H1 (cell line): ENCODE measurements at regions of chr5 and their contacts with region 1.

Region 1: DNA sequence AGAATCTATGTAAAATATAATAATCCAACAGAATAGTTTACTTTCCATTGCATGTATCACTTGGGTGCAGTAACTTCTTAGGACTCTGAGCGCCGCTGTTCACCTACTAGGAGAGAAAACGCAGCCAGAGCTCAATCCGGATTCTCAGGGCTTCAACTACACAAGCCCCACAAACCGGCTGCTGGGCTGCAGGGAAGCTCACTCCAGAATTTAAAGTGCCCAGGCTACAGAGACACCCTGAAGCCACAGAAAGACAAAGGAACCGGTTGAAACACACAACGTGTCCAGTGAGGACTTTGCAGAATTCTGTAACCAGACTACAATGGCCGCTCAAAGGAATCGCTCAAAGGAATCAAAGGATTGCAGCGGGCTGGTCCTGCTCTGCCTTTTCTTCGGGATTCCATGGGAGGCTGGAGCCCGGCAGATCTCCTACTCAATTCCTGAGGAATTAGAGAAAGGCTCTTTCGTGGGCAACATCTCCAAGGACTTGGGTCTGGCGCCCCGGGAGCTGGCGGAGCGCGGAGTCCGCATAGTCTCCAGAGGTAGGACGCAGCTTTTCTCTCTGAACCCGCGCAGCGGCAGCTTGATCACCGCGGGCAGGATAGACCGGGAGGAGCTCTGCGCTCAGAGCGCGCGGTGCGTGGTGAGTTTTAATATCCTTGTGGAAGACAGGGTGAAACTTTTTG is at the start of gene PCDHGA10:
- DNase-seq: peak in 1 of 2 experiments; percentile 67
- H3K4me3 ChIP-seq: peak within 1 kb of the TSS; percentile 66 to 82 (median 78)
- H3K27ac ChIP-seq: no peak within 1 kb of the TSS
- H3K4me1 ChIP-seq: no peaks in the 10 kb centered on the region
- H3K27me3 ChIP-seq: peaks cover 0 to 10% (median 6%) of the 10 kb centered on the region in 4 experiments; a peak in 6 of 7 replicates
- CTCF ChIP-seq: peak; percentile 35 to 84 (median 74)
- EP300 ChIP-seq: no peak
- POLR2A ChIP-seq: 0 out of 3 replicates have a peak, but pooled peaks of 1 of the 2 experiments have one; percentile 24
- RAD21 ChIP-seq: peak; percentile 84
- total RNA-seq, gene PCDHGA10: 2.1 and 2.2 TPM in 2 replicates

Region 2: GRCh38 chr5:141199359-141200235 is 213.4 kb before region 1 on chr5 and contains the start of gene PCDHB11:
- CTCF ChIA-PET with region 1: interaction called, 18 read pairs
- POLR2A ChIA-PET with region 1: no interaction called
- DNase-seq: no peak
- H3K4me3 ChIP-seq: peak within 1 kb of the TSS in 1 of 4 experiments; percentile 25; a peak in 2 of 8 replicates
- H3K27ac ChIP-seq: no peak within 1 kb of the TSS
- H3K4me1 ChIP-seq: no peaks in the 10 kb centered on the region
- H3K27me3 ChIP-seq: no peaks in the 10 kb centered on the region
- CTCF ChIP-seq: peak in 2 of 3 experiments; percentile 55 to 66; a peak in 3 of 4 replicates
- EP300 ChIP-seq: no peak
- POLR2A ChIP-seq: no peak
- RAD21 ChIP-seq: peak; percentile 68 to 73
- total RNA-seq, gene PCDHB11: 0.86 and 1.4 TPM in 2 replicates

Region 3: GRCh38 chr5:141245250-141245717 is 167.7 kb before region 1 on chr5 and contains the start of gene PCDHB15:
- CTCF ChIA-PET with region 1: interaction called, 32 read pairs
- POLR2A ChIA-PET with region 1: interaction called, 3 read pairs
- DNase-seq: peak in 1 of 2 experiments; percentile 83
- H3K4me3 ChIP-seq: peak within 1 kb of the TSS; percentile 19 to 69 (median 44); a peak in 7 of 8 replicates
- H3K27ac ChIP-seq: no peak within 1 kb of the TSS
- H3K4me1 ChIP-seq: peaks cover 0 to 3% (median 0%) of the 10 kb centered on the region in 4 experiments; a peak in 1 of 7 replicates
- H3K27me3 ChIP-seq: no peaks in the 10 kb centered on the region
- CTCF ChIP-seq: peak in 2 of 3 experiments; percentile 61 to 64; a peak in 3 of 4 replicates
- EP300 ChIP-seq: no peak
- POLR2A ChIP-seq: peak in 1 of 2 experiments; percentile 55; a peak in 1 of 3 replicates
- RAD21 ChIP-seq: peak; percentile 78 to 80
- total RNA-seq, gene PCDHB15: 3.9 and 4.0 TPM in 2 replicates

Region 4: GRCh38 chr5:141338538-141339306 is 74.3 kb before region 1 on chr5 and contains the start of gene PCDHGA2:
- CTCF ChIA-PET with region 1: interaction called, 15 read pairs
- POLR2A ChIA-PET with region 1: interaction called, 3 read pairs
- DNase-seq: no peak
- H3K4me3 ChIP-seq: no peak within 1 kb of the TSS
- H3K27ac ChIP-seq: no peak within 1 kb of the TSS
- H3K4me1 ChIP-seq: no peaks in the 10 kb centered on the region
- H3K27me3 ChIP-seq: no peaks in the 10 kb centered on the region
- CTCF ChIP-seq: peak; percentile 10 to 77 (median 60)
- EP300 ChIP-seq: no peak
- POLR2A ChIP-seq: no peak
- RAD21 ChIP-seq: peak; percentile 58 to 65
- total RNA-seq, gene PCDHGA2: 0.31 and 0.32 TPM in 2 replicates

Region 5: GRCh38 chr5:141392429-141393198 is 20.4 kb before region 1 on chr5 and contains the start of gene PCDHGA8:
- CTCF ChIA-PET with region 1: interaction called, 68 read pairs
- POLR2A ChIA-PET with region 1: no interaction called
- DNase-seq: no peak
- H3K4me3 ChIP-seq: peak within 1 kb of the TSS in 1 of 4 experiments; percentile 23; a peak in 1 of 8 replicates
- H3K27ac ChIP-seq: no peak within 1 kb of the TSS
- H3K4me1 ChIP-seq: no peaks in the 10 kb centered on the region
- H3K27me3 ChIP-seq: no peaks in the 10 kb centered on the region; a peak in 1 of 7 replicates
- CTCF ChIP-seq: no peak
- EP300 ChIP-seq: no peak
- POLR2A ChIP-seq: no peak
- RAD21 ChIP-seq: no peak
- total RNA-seq, gene PCDHGA8: 1.4 and 1.7 TPM in 2 replicates

Region 6: DNA sequence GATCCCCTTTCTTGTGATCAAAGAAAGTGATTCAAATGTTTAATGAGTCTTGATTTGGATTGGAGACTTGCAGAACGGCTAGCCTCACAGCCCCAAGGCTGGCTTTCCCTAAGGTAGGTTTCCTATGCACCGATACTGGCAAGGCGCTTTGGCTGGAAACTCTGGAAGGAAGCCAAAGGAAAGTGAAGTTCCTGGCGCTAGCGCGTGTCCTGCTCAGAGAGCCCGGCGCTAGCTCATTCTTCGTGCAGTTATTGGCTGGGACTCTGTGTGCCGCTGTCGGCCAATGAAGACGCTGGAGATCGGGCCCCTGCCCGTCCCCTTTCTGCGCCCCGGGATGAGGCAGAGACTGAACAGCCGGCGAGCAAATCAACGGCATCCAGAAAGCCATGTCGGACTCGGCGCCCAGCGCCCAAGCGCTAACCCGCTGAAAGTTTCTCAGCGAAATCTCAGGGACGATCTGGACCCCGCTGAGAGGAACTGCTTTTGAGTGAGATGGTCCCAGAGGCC is 62.7 kb after region 1 on chr5 and contains the start of gene PCDHGC3:
- CTCF ChIA-PET with region 1: interaction called, 25 read pairs
- POLR2A ChIA-PET with region 1: interaction called, 3 read pairs
- DNase-seq: peak in 1 of 2 experiments; percentile 86
- H3K4me3 ChIP-seq: peak within 1 kb of the TSS; percentile 68 to 85 (median 74)
- H3K27ac ChIP-seq: no peak within 1 kb of the TSS
- H3K4me1 ChIP-seq: peaks cover 0 to 5% (median 3%) of the 10 kb centered on the region in 4 experiments; a peak in 4 of 7 replicates
- H3K27me3 ChIP-seq: peaks cover 11 to 24% (median 23%) of the 10 kb centered on the region in 4 experiments
- CTCF ChIP-seq: peak; percentile 31 to 63 (median 49); a peak in 3 of 4 replicates
- EP300 ChIP-seq: no peak
- POLR2A ChIP-seq: no peak
- RAD21 ChIP-seq: peak; percentile 58 to 70
- total RNA-seq, gene PCDHGC3: 18.6 and 19.6 TPM in 2 replicates

Region 7: GRCh38 chr5:141564216-141564692 is 151.3 kb after region 1 on chr5:
- CTCF ChIA-PET with region 1: interaction called, 66 read pairs
- POLR2A ChIA-PET with region 1: interaction called, 5 read pairs
- DNase-seq: peak; percentile 56 to 62
- H3K4me3 ChIP-seq: no peak overlapping the region
- H3K27ac ChIP-seq: peak overlapping the region; percentile 26; the same call in 1 of the 2 replicates
- H3K4me1 ChIP-seq: peaks cover 0 to 7% (median 3%) of the 10 kb centered on the region in 4 experiments; a peak in 4 of 7 replicates
- H3K27me3 ChIP-seq: no peaks in the 10 kb centered on the region
- CTCF ChIP-seq: peak in 2 of 3 experiments; percentile 96; a peak in 3 of 4 replicates
- EP300 ChIP-seq: peak in 1 of 2 experiments; percentile 89; a peak in 2 of 3 replicates
- POLR2A ChIP-seq: no peak
- RAD21 ChIP-seq: peak; percentile 55 to 65

Region 8: GRCh38 chr5:141701360-141702119 is 288.5 kb after region 1 on chr5:
- CTCF ChIA-PET with region 1: no interaction called
- POLR2A ChIA-PET with region 1: no interaction called
- DNase-seq: no peak
- H3K4me3 ChIP-seq: peak overlapping the region in 1 of 4 experiments; percentile 73; a peak in 1 of 8 replicates
- H3K27ac ChIP-seq: no peak overlapping the region
- H3K4me1 ChIP-seq: peaks cover 5 to 9% (median 5%) of the 10 kb centered on the region in 4 experiments
- H3K27me3 ChIP-seq: peaks cover 0 to 36% (median 30%) of the 10 kb centered on the region in 4 experiments; a peak in 6 of 7 replicates
- CTCF ChIP-seq: no peak
- EP300 ChIP-seq: no peak
- POLR2A ChIP-seq: no peak
- RAD21 ChIP-seq: no peak